ENCODE measurements at regions of chr4 and their contacts with region 1.

Region 1: GRCh38 chr4:16205298-16206164 is 20.7 kb downstream of the TAPT1 start:
- DNase-seq: no peak
- ATAC-seq: peak; percentile 76
- H3K4me3 Mint-ChIP-seq: no peak overlapping the region
- H3K27ac Mint-ChIP-seq: peak overlapping the region; percentile 51
- H3K4me1 Mint-ChIP-seq: peaks cover 57% of the 10 kb centered on the region
- H3K27me3 Mint-ChIP-seq: no peaks in the 10 kb centered on the region
- CTCF ChIP-seq: peak; percentile 62

Region 2: DNA sequence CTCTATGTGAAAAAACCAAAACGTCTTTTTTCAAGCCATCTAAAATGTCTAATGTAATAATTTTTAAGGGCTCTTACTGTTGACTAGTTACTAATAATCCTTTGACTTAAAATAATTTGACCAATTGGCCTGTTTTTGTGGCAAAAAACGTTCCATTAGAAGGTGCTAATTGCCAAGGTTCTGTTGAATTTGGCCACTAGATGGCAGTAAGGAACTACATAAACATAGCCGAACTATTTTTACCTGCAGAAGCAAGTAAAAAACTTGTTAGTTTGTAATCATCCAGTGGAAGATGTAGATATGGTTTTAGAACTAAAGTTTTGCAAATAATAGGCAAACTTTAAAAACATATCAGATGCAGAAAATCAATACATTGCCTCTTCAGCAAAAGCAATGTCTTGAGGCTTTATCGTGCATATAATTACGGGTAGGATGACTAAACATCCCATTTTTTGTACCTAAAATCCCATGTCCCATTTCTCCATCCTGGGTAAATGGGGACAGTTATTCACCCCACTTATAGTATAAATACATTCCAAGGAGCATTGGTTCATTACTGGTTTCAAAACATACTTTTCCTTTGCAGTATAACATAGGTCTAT is 179.3 kb before region 1 on chr4:
- CTCF ChIA-PET with region 1: interaction called, 19 read pairs
- POLR2A ChIA-PET with region 1: no interaction called
- intact Hi-C with region 1: no loop called
- DNase-seq: peak; percentile 30
- ATAC-seq: no peak
- H3K4me3 Mint-ChIP-seq: no peak overlapping the region
- H3K27ac Mint-ChIP-seq: no peak overlapping the region
- H3K4me1 Mint-ChIP-seq: no peaks in the 10 kb centered on the region
- H3K27me3 Mint-ChIP-seq: peaks cover 13% of the 10 kb centered on the region
- CTCF ChIP-seq: peak; percentile 82

Region 3: GRCh38 chr4:16140520-16141249 is 64.8 kb before region 1 on chr4:
- CTCF ChIA-PET with region 1: no interaction called
- POLR2A ChIA-PET with region 1: no interaction called
- intact Hi-C with region 1: no loop called
- DNase-seq: no peak
- ATAC-seq: no peak
- H3K4me3 Mint-ChIP-seq: no peak overlapping the region
- H3K27ac Mint-ChIP-seq: no peak overlapping the region
- H3K4me1 Mint-ChIP-seq: no peaks in the 10 kb centered on the region
- H3K27me3 Mint-ChIP-seq: peaks cover 4% of the 10 kb centered on the region
- CTCF ChIP-seq: no peak

Region 4: GRCh38 chr4:16183604-16184003 is 21.9 kb before region 1 on chr4:
- CTCF ChIA-PET with region 1: interaction called, 10 read pairs
- POLR2A ChIA-PET with region 1: no interaction called
- intact Hi-C with region 1: no loop called
- DNase-seq: no peak
- ATAC-seq: no peak
- H3K4me3 Mint-ChIP-seq: no peak overlapping the region
- H3K27ac Mint-ChIP-seq: no peak overlapping the region
- H3K4me1 Mint-ChIP-seq: no peaks in the 10 kb centered on the region
- H3K27me3 Mint-ChIP-seq: no peaks in the 10 kb centered on the region
- CTCF ChIP-seq: no peak

Region 5: DNA sequence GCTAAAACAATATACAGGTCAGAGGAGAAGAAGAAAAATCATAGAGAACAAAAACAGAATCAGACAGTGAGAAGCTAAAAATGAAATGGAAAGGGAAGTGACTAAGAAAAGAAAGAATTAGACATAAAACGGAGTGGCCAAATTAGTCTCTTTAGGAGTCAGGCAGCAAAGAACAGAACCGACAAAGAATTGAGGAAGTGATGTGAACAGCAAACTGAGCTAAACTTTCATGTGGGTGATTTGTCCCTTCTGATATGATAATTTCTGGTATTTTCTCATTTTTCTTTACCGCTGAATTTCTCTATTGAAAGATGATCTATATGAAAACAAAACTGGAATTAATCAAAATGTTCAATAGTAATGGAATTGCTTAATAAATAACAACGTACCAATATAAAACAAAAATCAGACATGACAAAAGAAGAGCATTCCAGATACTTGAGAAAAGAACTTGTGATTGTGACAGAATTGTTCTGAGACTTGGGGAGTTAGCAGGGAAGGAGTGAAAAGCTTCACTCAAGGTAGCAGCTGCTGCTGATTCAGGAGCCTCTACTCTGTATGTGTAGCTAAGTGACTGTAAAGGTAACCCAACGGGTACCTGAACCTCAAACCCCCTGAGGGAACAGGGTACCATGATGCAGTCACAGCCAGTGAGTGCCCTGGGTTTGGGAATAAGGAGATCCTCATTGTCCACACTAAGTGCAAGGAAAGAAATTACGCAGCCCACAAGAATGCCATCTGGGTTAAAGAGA is 11.9 kb after region 1 on chr4:
- CTCF ChIA-PET with region 1: interaction called, 77 read pairs
- POLR2A ChIA-PET with region 1: interaction called, 5 read pairs
- intact Hi-C with region 1: no loop called
- DNase-seq: no peak
- ATAC-seq: peak; percentile 79
- H3K4me3 Mint-ChIP-seq: peak overlapping the region; percentile 47
- H3K27ac Mint-ChIP-seq: peak overlapping the region; percentile 52
- H3K4me1 Mint-ChIP-seq: peaks cover 71% of the 10 kb centered on the region
- H3K27me3 Mint-ChIP-seq: no peaks in the 10 kb centered on the region
- CTCF ChIP-seq: no peak

Region 6: DNA sequence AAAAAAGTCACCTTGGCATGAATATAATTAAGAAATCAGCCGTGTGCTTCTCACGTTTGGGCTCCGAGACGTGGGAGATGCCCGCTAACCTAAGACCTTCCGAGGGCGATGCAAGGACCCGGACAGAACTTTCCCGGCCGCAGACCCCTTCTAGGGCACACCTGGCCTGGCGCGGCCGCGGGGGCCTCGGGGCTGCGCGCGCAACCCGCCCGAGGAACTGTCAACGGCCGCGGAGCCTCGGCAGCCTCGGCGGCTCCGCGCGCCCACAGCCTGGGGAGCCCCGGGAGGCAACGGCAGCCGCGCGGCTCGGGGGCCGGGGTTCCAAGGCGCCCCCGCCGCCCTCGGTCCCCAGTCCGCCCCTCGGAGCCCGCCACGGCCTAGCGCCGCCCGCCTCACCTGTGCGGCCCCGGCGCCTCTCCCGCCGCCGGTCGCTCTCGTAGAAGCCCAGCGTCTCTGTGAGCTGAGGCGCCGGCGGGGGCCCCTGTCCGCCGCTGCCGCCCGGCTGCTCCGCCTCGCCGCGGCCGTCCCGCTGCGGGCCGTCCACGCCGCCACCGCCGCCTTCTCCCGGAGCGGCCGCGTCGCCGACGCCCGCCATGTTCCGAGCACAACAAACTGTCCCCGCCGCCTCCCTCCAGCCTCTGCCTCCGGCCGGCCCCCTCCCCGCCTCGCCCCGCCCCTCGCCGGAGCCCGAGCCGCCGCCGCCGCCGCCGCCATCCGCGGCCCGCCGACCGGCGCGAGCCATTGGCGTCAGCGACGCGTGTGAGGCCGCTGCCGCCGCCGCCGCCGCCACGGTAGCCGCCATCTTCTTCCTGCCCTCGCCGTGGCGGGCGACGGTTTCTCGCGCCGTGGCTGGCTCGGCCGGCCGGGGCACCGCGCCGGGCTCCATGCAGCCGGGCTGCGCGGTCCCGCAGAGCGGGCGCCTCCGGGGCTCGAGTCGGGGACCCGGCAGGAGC is 20.6 kb after region 1 on chr4 and contains the start of gene TAPT1:
- CTCF ChIA-PET with region 1: interaction called, 77 read pairs
- POLR2A ChIA-PET with region 1: interaction called, 5 read pairs
- intact Hi-C with region 1: no loop called
- DNase-seq: peak; percentile 80
- ATAC-seq: peak; percentile 82
- H3K4me3 Mint-ChIP-seq: peak within 1 kb of the TSS; percentile 91
- H3K27ac Mint-ChIP-seq: peak within 1 kb of the TSS; percentile 98
- H3K4me1 Mint-ChIP-seq: peaks cover 61% of the 10 kb centered on the region
- H3K27me3 Mint-ChIP-seq: no peaks in the 10 kb centered on the region
- CTCF ChIP-seq: no peak
- total RNA-seq, gene TAPT1: 34.2 to 35.5 TPM

Region 7: GRCh38 chr4:16264798-16265197 is 59.3 kb after region 1 on chr4:
- CTCF ChIA-PET with region 1: interaction called, 39 read pairs
- POLR2A ChIA-PET with region 1: no interaction called
- intact Hi-C with region 1: loop called (anchors 10 kb)
- DNase-seq: peak; percentile 10
- ATAC-seq: peak; percentile 58
- H3K4me3 Mint-ChIP-seq: no peak overlapping the region
- H3K27ac Mint-ChIP-seq: no peak overlapping the region
- H3K4me1 Mint-ChIP-seq: peaks cover 22% of the 10 kb centered on the region
- H3K27me3 Mint-ChIP-seq: no peaks in the 10 kb centered on the region
- CTCF ChIP-seq: peak; percentile 58

Measured in activated CD8-positive, alpha-beta T cell treated with anti-CD3 and anti-CD28 coated beads for 36 hours (primary cell).